Activated naive CD8-positive, alpha-beta T cell treated with anti-CD3 and anti-CD28 coated beads, Interleukin-2, amount 10 ng/mL, durations not matched to agents 7 days and 5 days (primary cell): ENCODE measurements at regions of chr10 and their contacts with region 1.

Region 1: DNA sequence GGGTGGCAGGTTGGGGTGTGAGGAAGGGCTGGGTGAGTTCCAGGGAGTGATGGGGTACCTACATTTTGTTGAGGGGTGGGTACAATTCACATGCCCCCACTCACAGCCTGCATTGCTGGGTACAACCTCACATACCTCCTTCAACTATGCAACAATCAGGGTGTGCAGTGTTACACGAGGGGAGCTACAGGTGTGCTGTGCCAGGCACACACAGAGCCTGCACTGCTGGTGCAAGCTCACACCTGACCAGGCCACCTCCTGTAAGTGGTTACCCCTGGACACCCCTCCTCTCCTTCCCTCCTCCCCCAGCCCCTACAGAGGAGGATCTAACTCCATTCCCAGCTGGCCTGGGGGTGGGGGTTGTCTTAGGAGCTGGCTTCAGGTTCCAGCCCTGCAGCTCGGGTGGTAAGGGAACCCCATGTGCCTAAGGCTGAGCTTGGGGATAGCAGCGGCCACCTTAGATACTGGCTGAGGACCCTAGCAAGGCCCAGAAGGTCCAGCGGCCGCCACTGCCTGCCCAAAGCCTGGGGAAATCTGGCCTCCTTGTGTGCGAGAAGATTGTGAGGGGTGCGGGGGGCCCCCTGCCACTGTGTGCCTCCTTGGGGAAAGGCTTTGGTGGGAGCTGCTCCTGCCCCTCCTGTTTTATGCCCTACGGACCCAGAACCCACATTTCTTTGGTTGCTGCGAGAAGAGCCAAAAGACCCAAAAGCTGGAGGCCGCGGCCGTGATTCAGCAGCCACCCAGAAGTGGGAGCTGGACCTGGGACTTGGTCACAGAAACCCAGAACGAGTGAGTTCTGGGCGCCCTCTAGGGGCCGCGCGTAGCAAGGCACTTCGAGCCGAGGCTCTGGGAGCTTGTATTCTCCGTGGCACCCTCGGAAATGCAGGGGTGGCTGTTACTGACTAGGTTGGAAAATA is 10.8 kb downstream of the TLX1 start:
- DNase-seq: peak; percentile 87
- ATAC-seq: peak; percentile 85
- H3K4me3 Mint-ChIP-seq: no peak overlapping the region
- H3K27ac Mint-ChIP-seq: no peak overlapping the region
- H3K4me1 Mint-ChIP-seq: peaks cover 8% of the 10 kb centered on the region
- H3K27me3 Mint-ChIP-seq: peaks cover 91% of the 10 kb centered on the region

Region 2: GRCh38 chr10:101095542-101096213 is 46.2 kb before region 1 on chr10:
- POLR2A ChIA-PET with region 1: interaction called, 10 read pairs
- DNase-seq: peak; percentile 78
- ATAC-seq: peak; percentile 89
- H3K4me3 Mint-ChIP-seq: no peak overlapping the region
- H3K27ac Mint-ChIP-seq: no peak overlapping the region
- H3K4me1 Mint-ChIP-seq: peaks cover 3% of the 10 kb centered on the region
- H3K27me3 Mint-ChIP-seq: peaks cover 25% of the 10 kb centered on the region